ENCODE measurements at regions of chr18 and their contacts with region 1.

Region 1: GRCh38 chr18:35231052-35231451 is 9.8 kb upstream of the ZNF397 start:
- DNase-seq: peak; percentile 71 to 92 (median 76)
- ATAC-seq: peak; percentile 96
- H3K4me3 ChIP-seq: no peak overlapping the region
- H3K27ac ChIP-seq: 0 out of 3 replicates have a peak overlapping the region, but pooled peaks have one; percentile 9
- H3K4me1 ChIP-seq: 0 out of 5 replicates have a peak, but pooled peaks cover 0 to 3% of the 10 kb centered on the region in 2 experiments
- H3K27me3 ChIP-seq: no peaks in the 10 kb centered on the region
- CTCF ChIP-seq: peak; percentile 91 to 97 (median 92)
- EP300 ChIP-seq: peak; percentile 40; the same call in 1 of the 2 replicates
- POLR2A ChIP-seq: no peak
- RAD21 ChIP-seq: peak; percentile 85 to 94

Region 2: DNA sequence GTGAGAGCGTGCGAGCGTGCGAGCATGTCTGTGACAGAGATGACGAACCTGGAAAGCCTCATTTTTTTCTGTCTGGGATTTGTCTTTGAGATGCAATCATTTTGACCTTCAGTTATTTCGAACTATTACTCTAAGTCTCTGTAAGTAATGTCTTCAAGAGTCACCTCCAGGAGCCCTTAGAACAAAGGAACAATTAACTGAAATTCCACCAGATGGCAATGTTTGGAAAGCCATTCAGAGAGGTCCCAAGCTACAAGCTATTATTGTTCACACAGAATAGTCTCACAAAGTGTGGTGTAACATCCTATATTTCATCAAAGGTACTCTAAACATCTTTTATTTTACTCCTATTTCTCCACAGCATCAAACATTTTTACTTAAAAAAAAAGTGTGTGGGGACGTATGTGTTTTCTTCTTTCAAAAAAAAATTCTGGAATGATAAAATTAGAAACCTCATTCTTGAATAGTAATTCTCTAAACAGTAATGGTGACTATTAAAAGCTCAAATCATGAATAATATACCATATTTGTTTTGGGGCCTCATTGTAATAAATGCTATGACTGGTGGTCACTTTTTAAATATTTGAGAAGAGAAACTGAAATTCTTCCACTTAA is 225.0 kb before region 1 on chr18:
- CTCF ChIA-PET with region 1: no interaction called
- POLR2A ChIA-PET with region 1: no interaction called
- in situ Hi-C with region 1: no loop called
- intact Hi-C with region 1: loop called (anchors 1 kb)
- DNase-seq: peak; percentile 20 to 80 (median 46)
- ATAC-seq: peak; percentile 98
- H3K4me3 ChIP-seq: no peak overlapping the region
- H3K27ac ChIP-seq: no peak overlapping the region
- H3K4me1 ChIP-seq: no peaks in the 10 kb centered on the region; a peak in 1 of 5 replicates
- H3K27me3 ChIP-seq: peaks cover 0 to 6% of the 10 kb centered on the region in 2 experiments; a peak in 1 of 5 replicates
- CTCF ChIP-seq: peak; percentile 62 to 85 (median 69); a peak in 5 of 6 replicates
- EP300 ChIP-seq: no peak
- POLR2A ChIP-seq: no peak
- RAD21 ChIP-seq: peak; percentile 94 to 97

Region 3: DNA sequence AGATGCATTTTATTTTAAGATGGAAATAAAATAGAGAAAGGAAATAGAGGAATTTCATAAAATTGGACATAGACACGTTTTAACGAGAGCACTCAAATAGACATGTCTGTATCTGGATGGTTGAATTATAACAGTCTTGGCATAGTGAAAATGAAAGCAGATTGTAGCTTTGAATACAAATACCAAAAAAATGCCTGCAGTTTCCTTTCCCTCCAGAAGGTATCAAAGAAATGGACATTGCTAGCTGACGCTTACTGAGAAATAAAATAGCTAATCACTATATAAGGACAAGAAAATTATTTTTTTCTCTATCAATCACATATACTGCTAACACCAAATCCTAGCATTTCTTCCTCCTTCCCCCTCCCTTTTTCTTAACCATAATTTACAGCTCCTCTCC is 201.3 kb before region 1 on chr18:
- CTCF ChIA-PET with region 1: no interaction called
- POLR2A ChIA-PET with region 1: no interaction called
- in situ Hi-C with region 1: no loop called
- intact Hi-C with region 1: loop called (anchors 5 kb)
- DNase-seq: no peak
- ATAC-seq: no peak; the same call in 2 of the 3 replicates
- H3K4me3 ChIP-seq: no peak overlapping the region
- H3K27ac ChIP-seq: no peak overlapping the region
- H3K4me1 ChIP-seq: peaks cover 0 to 11% of the 10 kb centered on the region in 2 experiments; a peak in 2 of 5 replicates
- H3K27me3 ChIP-seq: no peaks in the 10 kb centered on the region
- CTCF ChIP-seq: no peak
- EP300 ChIP-seq: no peak
- POLR2A ChIP-seq: no peak
- RAD21 ChIP-seq: no peak

Region 4: GRCh38 chr18:35127201-35127600 is 103.9 kb before region 1 on chr18:
- CTCF ChIA-PET with region 1: no interaction called
- POLR2A ChIA-PET with region 1: no interaction called
- in situ Hi-C with region 1: no loop called
- intact Hi-C with region 1: no loop called
- DNase-seq: peak; percentile 23 to 58 (median 35)
- ATAC-seq: peak; percentile 86
- H3K4me3 ChIP-seq: no peak overlapping the region
- H3K27ac ChIP-seq: no peak overlapping the region
- H3K4me1 ChIP-seq: peaks cover 7 to 18% of the 10 kb centered on the region in 2 experiments; a peak in 4 of 5 replicates
- H3K27me3 ChIP-seq: no peaks in the 10 kb centered on the region
- CTCF ChIP-seq: peak; percentile 61 to 67 (median 63)
- EP300 ChIP-seq: no peak
- POLR2A ChIP-seq: no peak
- RAD21 ChIP-seq: peak; percentile 30 to 67; a peak in 3 of 4 replicates

Region 5: DNA sequence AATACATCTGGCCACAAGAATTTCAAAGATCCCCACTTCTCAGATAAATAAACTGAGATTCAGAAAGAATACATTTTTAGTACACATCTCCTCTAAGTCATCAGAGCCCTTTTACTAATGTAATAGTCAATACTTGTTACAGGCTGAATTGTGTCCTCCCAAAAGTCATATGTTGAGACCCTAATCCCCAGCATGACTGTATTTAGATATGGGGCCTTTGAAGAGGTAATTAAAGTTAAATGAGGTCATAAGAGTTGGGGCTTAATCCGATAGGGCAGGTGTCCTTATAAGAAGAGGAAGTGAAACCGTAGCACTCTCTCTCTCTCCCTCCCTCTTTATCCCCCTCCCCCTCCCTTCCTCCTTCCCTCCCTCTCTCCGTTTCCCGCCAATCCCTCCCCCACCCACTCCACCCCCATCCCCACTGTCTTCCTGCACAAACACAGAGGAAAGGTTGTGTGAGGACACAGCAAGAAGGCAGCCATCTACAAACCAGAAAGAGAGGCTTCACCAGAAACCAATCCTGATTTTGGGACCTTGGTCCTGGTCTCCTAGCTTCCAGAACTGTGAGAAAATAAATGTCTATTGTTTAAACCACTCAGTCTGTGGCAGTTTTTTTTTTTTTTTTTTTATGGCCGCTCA is 56.8 kb before region 1 on chr18:
- CTCF ChIA-PET with region 1: no interaction called
- POLR2A ChIA-PET with region 1: no interaction called
- in situ Hi-C with region 1: no loop called
- intact Hi-C with region 1: loop called (anchors 5 kb)
- DNase-seq: peak; percentile 29 to 75 (median 56)
- ATAC-seq: peak; percentile 78
- H3K4me3 ChIP-seq: no peak overlapping the region
- H3K27ac ChIP-seq: peak overlapping the region; percentile 48; the same call in 1 of the 3 replicates
- H3K4me1 ChIP-seq: peaks cover 0 to 7% of the 10 kb centered on the region in 2 experiments; a peak in 3 of 5 replicates
- H3K27me3 ChIP-seq: no peaks in the 10 kb centered on the region
- CTCF ChIP-seq: no peak
- EP300 ChIP-seq: peak; percentile 51
- POLR2A ChIP-seq: no peak
- RAD21 ChIP-seq: no peak

Region 6: GRCh38 chr18:35355140-35355618 is 124.1 kb after region 1 on chr18:
- CTCF ChIA-PET with region 1: interaction called, 3 read pairs
- POLR2A ChIA-PET with region 1: no interaction called
- in situ Hi-C with region 1: no loop called
- intact Hi-C with region 1: loop called (anchors 1 kb)
- DNase-seq: peak in 3 of 4 experiments; percentile 32 to 64 (median 52)
- ATAC-seq: peak; percentile 96
- H3K4me3 ChIP-seq: no peak overlapping the region
- H3K27ac ChIP-seq: no peak overlapping the region
- H3K4me1 ChIP-seq: no peaks in the 10 kb centered on the region; a peak in 1 of 5 replicates
- H3K27me3 ChIP-seq: no peaks in the 10 kb centered on the region
- CTCF ChIP-seq: peak; percentile 54 to 66 (median 57)
- EP300 ChIP-seq: no peak
- POLR2A ChIP-seq: no peak
- RAD21 ChIP-seq: peak; percentile 47 to 63; a peak in 3 of 4 replicates

Region 7: GRCh38 chr18:35386600-35387351 is 155.7 kb after region 1 on chr18:
- CTCF ChIA-PET with region 1: interaction called, 10 read pairs
- POLR2A ChIA-PET with region 1: interaction called, 3 read pairs
- in situ Hi-C with region 1: no loop called
- intact Hi-C with region 1: loop called (anchors 2 kb)
- DNase-seq: peak; percentile 77 to 86 (median 78)
- ATAC-seq: peak; percentile 94
- H3K4me3 ChIP-seq: no peak overlapping the region
- H3K27ac ChIP-seq: no peak overlapping the region
- H3K4me1 ChIP-seq: no peaks in the 10 kb centered on the region
- H3K27me3 ChIP-seq: no peaks in the 10 kb centered on the region
- CTCF ChIP-seq: peak; percentile 82 to 98 (median 93)
- EP300 ChIP-seq: no peak
- POLR2A ChIP-seq: no peak
- RAD21 ChIP-seq: peak; percentile 83 to 89

Region 8: GRCh38 chr18:35580701-35581539 is 349.9 kb after region 1 on chr18:
- CTCF ChIA-PET with region 1: no interaction called
- POLR2A ChIA-PET with region 1: no interaction called
- in situ Hi-C with region 1: no loop called
- intact Hi-C with region 1: no loop called
- DNase-seq: peak; percentile 59 to 76 (median 67)
- ATAC-seq: peak; percentile 89
- H3K4me3 ChIP-seq: peak overlapping the region; percentile 69
- H3K27ac ChIP-seq: peak overlapping the region; percentile 65
- H3K4me1 ChIP-seq: peaks cover 14 to 21% of the 10 kb centered on the region in 2 experiments; a peak in 4 of 5 replicates
- H3K27me3 ChIP-seq: no peaks in the 10 kb centered on the region; a peak in 1 of 5 replicates
- CTCF ChIP-seq: no peak
- EP300 ChIP-seq: no peak
- POLR2A ChIP-seq: no peak
- RAD21 ChIP-seq: no peak

Region 9: GRCh38 chr18:35949903-35950627 is 719.0 kb after region 1 on chr18:
- CTCF ChIA-PET with region 1: no interaction called
- POLR2A ChIA-PET with region 1: no interaction called
- in situ Hi-C with region 1: no loop called
- intact Hi-C with region 1: loop called (anchors 10 kb)
- DNase-seq: peak; percentile 60 to 70 (median 66)
- ATAC-seq: peak; percentile 89
- H3K4me3 ChIP-seq: no peak overlapping the region
- H3K27ac ChIP-seq: no peak overlapping the region
- H3K4me1 ChIP-seq: peaks cover 0 to 7% of the 10 kb centered on the region in 2 experiments; a peak in 2 of 5 replicates
- H3K27me3 ChIP-seq: peaks cover 0 to 12% of the 10 kb centered on the region in 2 experiments; a peak in 4 of 5 replicates
- CTCF ChIP-seq: peak; percentile 72 to 90 (median 72)
- EP300 ChIP-seq: no peak
- POLR2A ChIP-seq: no peak
- RAD21 ChIP-seq: peak; percentile 46 to 74